Left colon (tissue), 2 donors: ENCODE measurements at regions of chr6 and their contacts with region 1.

Region 1: DNA sequence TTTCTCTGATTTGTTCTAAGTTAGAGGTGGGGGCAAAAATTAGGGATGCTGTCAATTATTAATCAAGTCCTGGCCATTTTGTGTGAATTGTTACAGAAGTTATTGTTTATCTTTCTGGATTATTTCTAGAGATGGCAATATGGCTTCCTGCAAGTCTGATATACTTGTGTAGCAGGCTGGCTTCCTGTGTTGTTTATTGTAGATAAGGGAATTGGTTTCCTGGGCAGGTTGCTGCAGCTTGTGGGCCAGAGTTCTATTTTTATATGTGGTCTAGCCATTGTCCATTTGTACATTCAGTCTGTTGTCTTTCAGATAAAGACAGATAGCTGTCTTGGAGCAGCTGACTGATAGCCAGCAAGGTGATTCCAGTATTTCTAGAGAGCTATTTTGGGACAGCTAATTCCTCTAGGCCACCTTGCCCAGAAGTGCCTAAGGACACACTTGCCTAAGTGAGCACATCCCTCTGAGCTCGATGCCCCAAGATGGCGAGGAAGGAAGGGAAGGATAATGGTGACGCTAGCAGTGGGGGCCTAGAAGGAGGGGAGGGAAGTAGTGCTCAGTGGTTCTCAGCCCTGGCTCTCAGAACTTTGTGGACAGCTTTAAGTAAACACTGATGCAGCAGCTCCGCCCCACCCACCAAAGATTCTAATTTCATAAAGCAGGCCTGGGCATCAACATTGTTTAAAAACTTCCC is 25.5 kb downstream of the DDO start:
- DNase-seq: no peak
- ATAC-seq: no peak

Region 2: GRCh38 chr6:110179401-110180227 is 210.2 kb before region 1 on chr6 and contains the start of gene WASF1:
- intact Hi-C with region 1: loop called in 1 of 2 experiments (anchors 5 kb)
- DNase-seq: peak; percentile 91 to 93
- ATAC-seq: peak; percentile 98
- total RNA-seq, gene WASF1: 2.8 to 4.1 TPM

Region 3: GRCh38 chr6:111038534-111039252 is 648.9 kb after region 1 on chr6:
- intact Hi-C with region 1: no loop called
- DNase-seq: no peak
- ATAC-seq: no peak